ENCODE measurements at regions of chr1 and their contacts with region 1.

Region 1: GRCh38 chr1:9321480-9321849 is 28.8 kb downstream of the SPSB1 start:
- DNase-seq: no peak
- ATAC-seq: no peak
- H3K4me3 ChIP-seq: no peak overlapping the region
- H3K4me3 Mint-ChIP-seq: no peak overlapping the region
- H3K27ac ChIP-seq: no peak overlapping the region
- H3K27ac Mint-ChIP-seq: no peak overlapping the region
- H3K4me1 ChIP-seq: peaks cover 0 to 11% of the 10 kb centered on the region in 2 experiments
- H3K4me1 Mint-ChIP-seq: peaks cover 6 to 10% (median 9%) of the 10 kb centered on the region in 3 donors
- H3K27me3 ChIP-seq: peaks cover 0 to 8% of the 10 kb centered on the region in 2 experiments
- H3K27me3 Mint-ChIP-seq: no peaks in the 10 kb centered on the region

Region 2: DNA sequence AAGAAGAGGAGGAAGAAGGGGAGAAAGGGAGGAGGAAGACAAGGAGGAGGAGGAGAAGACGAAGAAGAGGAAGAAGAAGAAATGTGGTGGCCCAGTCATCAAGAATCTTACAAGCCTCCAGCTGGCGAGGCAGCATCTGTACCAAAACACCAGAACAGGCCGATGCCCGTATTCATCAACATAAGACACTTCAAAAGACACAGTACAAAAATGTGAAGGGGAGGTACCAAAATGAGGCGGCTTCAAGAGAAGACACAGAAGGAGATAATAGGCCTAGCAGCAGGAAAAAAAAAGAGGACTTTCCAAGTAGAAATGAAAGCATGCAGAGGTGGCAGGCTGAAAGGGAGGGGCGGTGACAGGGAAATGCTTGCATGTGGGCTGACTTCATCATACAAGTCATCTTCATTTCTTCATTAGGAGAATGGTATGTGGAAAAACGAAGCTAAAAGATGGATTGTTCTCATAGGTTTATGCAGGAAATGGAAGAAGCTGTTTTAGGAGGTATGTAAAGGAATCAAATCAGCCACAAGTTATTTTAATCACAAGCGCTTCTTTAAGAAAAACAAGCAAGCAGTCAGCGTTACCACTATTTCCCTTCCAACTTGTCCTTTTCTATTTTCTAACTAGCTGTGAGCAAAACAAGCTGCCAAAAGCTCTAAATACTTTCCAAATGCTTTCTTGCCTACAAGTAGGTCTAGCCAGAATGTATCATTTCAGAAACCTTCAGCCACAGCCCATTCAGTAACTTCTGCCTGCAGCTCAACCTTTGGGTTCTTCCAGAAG is 811.2 kb before region 1 on chr1:
- CTCF ChIA-PET with region 1: no interaction called
- POLR2A ChIA-PET with region 1: interaction called in 1 of 2 experiments, 10 read pairs
- DNase-seq: peak in 32 of 35 experiments; percentile 5 to 77 (median 44)
- ATAC-seq: peak; percentile 76 to 97 (median 84)
- H3K4me3 ChIP-seq: peak overlapping the region in 1 of 2 donors; percentile 40
- H3K4me3 Mint-ChIP-seq: peak overlapping the region; percentile 49 to 70 (median 66)
- H3K27ac ChIP-seq: peak overlapping the region; percentile 66
- H3K27ac Mint-ChIP-seq: peak overlapping the region; percentile 93
- H3K4me1 ChIP-seq: peaks cover 25 to 28% of the 10 kb centered on the region in 2 experiments
- H3K4me1 Mint-ChIP-seq: peaks cover 53 to 66% (median 55%) of the 10 kb centered on the region in 3 donors
- H3K27me3 ChIP-seq: no peaks in the 10 kb centered on the region
- H3K27me3 Mint-ChIP-seq: no peaks in the 10 kb centered on the region

Region 3: GRCh38 chr1:9388335-9389180 is 67.1 kb after region 1 on chr1:
- CTCF ChIA-PET with region 1: no interaction called
- POLR2A ChIA-PET with region 1: no interaction called
- DNase-seq: no peak
- ATAC-seq: no peak
- H3K4me3 ChIP-seq: no peak overlapping the region
- H3K4me3 Mint-ChIP-seq: no peak overlapping the region
- H3K27ac ChIP-seq: no peak overlapping the region
- H3K27ac Mint-ChIP-seq: no peak overlapping the region
- H3K4me1 ChIP-seq: no peaks in the 10 kb centered on the region
- H3K4me1 Mint-ChIP-seq: peaks cover 0 to 6% (median 5%) of the 10 kb centered on the region in 3 donors
- H3K27me3 ChIP-seq: peaks cover 0 to 24% of the 10 kb centered on the region in 2 experiments
- H3K27me3 Mint-ChIP-seq: peaks cover 0 to 7% of the 10 kb centered on the region in 2 donors

Region 4: DNA sequence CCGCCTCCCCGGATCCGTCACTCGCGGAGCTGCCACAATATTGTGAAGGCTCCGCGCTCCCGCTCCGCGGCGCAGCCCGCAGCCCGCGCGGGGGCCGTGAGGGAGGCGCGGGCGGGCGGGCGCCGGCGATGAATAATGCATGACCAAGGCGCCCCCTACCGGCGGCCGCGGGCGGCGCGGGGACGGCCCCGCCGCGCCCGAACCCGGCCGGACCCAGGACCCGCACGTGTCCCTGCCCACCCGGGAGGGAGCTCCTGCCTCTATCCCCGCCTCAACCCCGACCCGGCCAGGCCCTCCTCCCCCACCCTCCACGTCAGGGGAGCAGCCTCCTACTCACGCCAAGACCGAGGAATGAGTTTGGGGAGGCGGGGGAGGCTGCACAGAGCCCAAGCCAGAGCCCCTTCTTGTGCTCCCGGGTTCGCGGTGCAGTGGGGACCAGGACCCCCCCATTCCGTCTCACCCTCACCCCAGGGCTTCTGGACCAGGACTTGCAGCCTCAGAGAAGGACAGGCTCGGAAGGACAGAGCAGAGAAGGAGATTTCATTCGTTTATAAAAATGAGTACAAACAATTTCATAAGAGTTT is 1545.8 kb after region 1 on chr1:
- CTCF ChIA-PET with region 1: no interaction called
- POLR2A ChIA-PET with region 1: no interaction called
- DNase-seq: peak; percentile 10 to 77 (median 54)
- ATAC-seq: peak; percentile 85 to 92 (median 88)
- H3K4me3 ChIP-seq: peak overlapping the region; percentile 5 to 10
- H3K4me3 Mint-ChIP-seq: peak overlapping the region in 1 of 3 donors; percentile 60
- H3K27ac ChIP-seq: no peak overlapping the region
- H3K27ac Mint-ChIP-seq: no peak overlapping the region
- H3K4me1 ChIP-seq: peaks cover 0 to 16% of the 10 kb centered on the region in 2 experiments
- H3K4me1 Mint-ChIP-seq: peaks cover 12 to 30% (median 18%) of the 10 kb centered on the region in 3 donors
- H3K27me3 ChIP-seq: peaks cover 7 to 73% of the 10 kb centered on the region in 2 experiments
- H3K27me3 Mint-ChIP-seq: peaks cover 41 to 76% of the 10 kb centered on the region in 2 donors